Activated B cell treated with CpG ODN at 0.5 μM for 24 hours (primary cell): ENCODE measurements at regions of chr3 and their contacts with region 1.

Region 1: GRCh38 chr3:133506215-133506901 is 67.1 kb upstream of the CDV3 start:
- DNase-seq: no peak
- ATAC-seq: peak; percentile 97
- H3K4me3 Mint-ChIP-seq: peak overlapping the region; percentile 56
- H3K27ac Mint-ChIP-seq: peak overlapping the region; percentile 60
- H3K4me1 Mint-ChIP-seq: peaks cover 13% of the 10 kb centered on the region
- H3K27me3 Mint-ChIP-seq: no peaks in the 10 kb centered on the region
- CTCF ChIP-seq: no peak

Region 2: GRCh38 chr3:133152056-133152455 is 354.3 kb before region 1 on chr3:
- CTCF ChIA-PET with region 1: no interaction called
- POLR2A ChIA-PET with region 1: no interaction called
- intact Hi-C with region 1: no loop called
- DNase-seq: no peak
- ATAC-seq: no peak
- H3K4me3 Mint-ChIP-seq: no peak overlapping the region
- H3K27ac Mint-ChIP-seq: no peak overlapping the region
- H3K4me1 Mint-ChIP-seq: no peaks in the 10 kb centered on the region
- H3K27me3 Mint-ChIP-seq: peaks cover 10% of the 10 kb centered on the region
- CTCF ChIP-seq: no peak

Region 3: GRCh38 chr3:133464573-133464972 is 41.8 kb before region 1 on chr3:
- CTCF ChIA-PET with region 1: no interaction called
- POLR2A ChIA-PET with region 1: no interaction called
- intact Hi-C with region 1: loop called (anchors 2 kb)
- DNase-seq: no peak
- ATAC-seq: no peak
- H3K4me3 Mint-ChIP-seq: no peak overlapping the region
- H3K27ac Mint-ChIP-seq: no peak overlapping the region
- H3K4me1 Mint-ChIP-seq: peaks cover 60% of the 10 kb centered on the region
- H3K27me3 Mint-ChIP-seq: no peaks in the 10 kb centered on the region
- CTCF ChIP-seq: no peak

Region 4: DNA sequence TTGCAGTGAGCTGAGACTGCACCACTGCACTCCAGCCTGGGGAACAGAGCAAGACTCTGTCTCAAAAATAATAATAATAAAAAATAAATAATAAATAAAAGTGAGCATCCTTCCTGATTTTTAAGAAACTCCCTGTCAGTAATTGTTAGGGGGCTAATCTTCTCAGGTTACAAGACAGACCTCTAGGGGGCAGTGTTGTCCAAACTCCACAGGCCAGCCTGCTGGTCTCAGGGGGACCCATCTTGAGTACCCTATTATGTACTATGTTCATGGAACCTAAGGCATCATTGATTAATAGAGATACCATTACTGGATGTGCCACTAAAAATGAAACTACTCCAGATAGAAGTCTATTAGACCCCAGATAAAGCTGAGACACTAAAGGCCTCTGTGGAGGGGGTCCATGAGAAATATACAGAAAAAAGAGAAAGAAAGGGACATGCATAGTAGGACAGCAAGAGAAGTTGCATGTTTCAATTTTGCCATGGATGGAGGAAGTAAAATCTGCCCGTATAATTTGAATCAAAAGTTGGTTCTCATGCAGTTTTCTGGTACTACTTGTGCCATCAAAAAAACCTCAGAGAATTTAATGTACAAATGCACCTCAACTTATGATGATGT is 18.3 kb before region 1 on chr3:
- CTCF ChIA-PET with region 1: interaction called, 3 read pairs
- POLR2A ChIA-PET with region 1: interaction called, 5 read pairs
- intact Hi-C with region 1: loop called (anchors 2 kb)
- DNase-seq: no peak
- ATAC-seq: peak; percentile 20
- H3K4me3 Mint-ChIP-seq: no peak overlapping the region
- H3K27ac Mint-ChIP-seq: no peak overlapping the region
- H3K4me1 Mint-ChIP-seq: peaks cover 57% of the 10 kb centered on the region
- H3K27me3 Mint-ChIP-seq: no peaks in the 10 kb centered on the region
- CTCF ChIP-seq: no peak

Region 5: GRCh38 chr3:133521946-133522345 is 15.6 kb after region 1 on chr3:
- CTCF ChIA-PET with region 1: no interaction called
- POLR2A ChIA-PET with region 1: no interaction called
- intact Hi-C with region 1: loop called (anchors 2 kb)
- DNase-seq: no peak
- ATAC-seq: no peak
- H3K4me3 Mint-ChIP-seq: no peak overlapping the region
- H3K27ac Mint-ChIP-seq: no peak overlapping the region
- H3K4me1 Mint-ChIP-seq: peaks cover 15% of the 10 kb centered on the region
- H3K27me3 Mint-ChIP-seq: no peaks in the 10 kb centered on the region
- CTCF ChIP-seq: no peak